CD8-positive, alpha-beta T cell (primary cell): ENCODE measurements at regions of chr2 and their contacts with region 1.

Region 1: DNA sequence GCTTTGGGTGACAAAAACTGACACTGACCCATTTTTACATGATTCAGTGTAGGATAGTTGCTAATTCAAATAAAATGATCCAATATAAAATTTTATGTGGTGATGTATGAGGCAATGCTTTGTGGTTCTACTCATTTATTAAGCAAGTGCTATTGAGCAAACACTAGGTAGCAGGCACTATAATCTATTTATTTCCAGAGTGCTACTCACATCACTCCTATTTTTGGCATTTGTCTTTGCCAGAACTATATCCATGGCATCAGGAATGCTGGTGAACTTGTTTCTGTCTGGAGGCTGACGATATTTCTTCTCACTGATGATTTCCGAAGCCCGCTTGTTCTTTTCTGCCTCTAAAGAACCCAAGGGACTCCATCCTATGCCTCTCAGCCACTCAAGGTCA is 84.3 kb downstream of the NEB start:
- DNase-seq: no peak
- ATAC-seq: no peak
- H3K4me3 ChIP-seq: no peak overlapping the region
- H3K4me3 Mint-ChIP-seq: no peak overlapping the region
- H3K27ac ChIP-seq: no peak overlapping the region
- H3K27ac Mint-ChIP-seq: no peak overlapping the region
- H3K4me1 ChIP-seq: no peaks in the 10 kb centered on the region
- H3K4me1 Mint-ChIP-seq: no peaks in the 10 kb centered on the region
- H3K27me3 ChIP-seq: no peaks in the 10 kb centered on the region
- H3K27me3 Mint-ChIP-seq: no peaks in the 10 kb centered on the region
- CTCF ChIP-seq: no peak

Region 2: GRCh38 chr2:151630372-151630771 is 19.6 kb before region 1 on chr2:
- CTCF ChIA-PET with region 1: no interaction called
- POLR2A ChIA-PET with region 1: no interaction called
- intact Hi-C with region 1: loop called in 1 of 2 experiments (anchors 2 kb)
- DNase-seq: no peak
- ATAC-seq: no peak
- H3K4me3 ChIP-seq: no peak overlapping the region
- H3K4me3 Mint-ChIP-seq: no peak overlapping the region
- H3K27ac ChIP-seq: no peak overlapping the region
- H3K27ac Mint-ChIP-seq: no peak overlapping the region
- H3K4me1 ChIP-seq: no peaks in the 10 kb centered on the region
- H3K4me1 Mint-ChIP-seq: no peaks in the 10 kb centered on the region
- H3K27me3 ChIP-seq: no peaks in the 10 kb centered on the region
- H3K27me3 Mint-ChIP-seq: no peaks in the 10 kb centered on the region
- CTCF ChIP-seq: no peak

Region 3: DNA sequence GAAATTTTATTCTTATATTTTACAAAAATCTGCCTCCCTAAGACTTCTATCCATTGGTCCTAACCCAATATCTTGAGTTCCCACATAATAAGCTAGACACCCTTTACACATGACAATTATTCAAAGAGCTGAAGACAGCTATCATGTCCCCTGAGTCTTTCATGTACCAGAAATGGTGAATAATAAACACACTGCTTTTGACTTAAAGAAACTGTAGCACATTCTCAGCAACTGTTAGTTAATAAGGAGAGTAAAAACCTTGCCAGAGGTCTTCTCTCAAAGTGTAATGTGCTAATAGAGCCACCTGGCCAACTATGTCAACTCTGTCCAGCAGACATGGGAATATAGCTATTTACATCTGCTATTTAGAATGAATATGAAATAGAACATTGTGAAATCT is 288.0 kb after region 1 on chr2:
- CTCF ChIA-PET with region 1: no interaction called
- POLR2A ChIA-PET with region 1: no interaction called
- intact Hi-C with region 1: no loop called
- DNase-seq: no peak
- ATAC-seq: no peak
- H3K4me3 ChIP-seq: no peak overlapping the region
- H3K4me3 Mint-ChIP-seq: no peak overlapping the region
- H3K27ac ChIP-seq: no peak overlapping the region
- H3K27ac Mint-ChIP-seq: no peak overlapping the region
- H3K4me1 ChIP-seq: no peaks in the 10 kb centered on the region
- H3K4me1 Mint-ChIP-seq: no peaks in the 10 kb centered on the region
- H3K27me3 ChIP-seq: no peaks in the 10 kb centered on the region
- H3K27me3 Mint-ChIP-seq: peaks cover 17% of the 10 kb centered on the region
- CTCF ChIP-seq: no peak